GM12878 (cell line): ENCODE measurements at regions of chr3 and their contacts with region 1.

Region 1: DNA sequence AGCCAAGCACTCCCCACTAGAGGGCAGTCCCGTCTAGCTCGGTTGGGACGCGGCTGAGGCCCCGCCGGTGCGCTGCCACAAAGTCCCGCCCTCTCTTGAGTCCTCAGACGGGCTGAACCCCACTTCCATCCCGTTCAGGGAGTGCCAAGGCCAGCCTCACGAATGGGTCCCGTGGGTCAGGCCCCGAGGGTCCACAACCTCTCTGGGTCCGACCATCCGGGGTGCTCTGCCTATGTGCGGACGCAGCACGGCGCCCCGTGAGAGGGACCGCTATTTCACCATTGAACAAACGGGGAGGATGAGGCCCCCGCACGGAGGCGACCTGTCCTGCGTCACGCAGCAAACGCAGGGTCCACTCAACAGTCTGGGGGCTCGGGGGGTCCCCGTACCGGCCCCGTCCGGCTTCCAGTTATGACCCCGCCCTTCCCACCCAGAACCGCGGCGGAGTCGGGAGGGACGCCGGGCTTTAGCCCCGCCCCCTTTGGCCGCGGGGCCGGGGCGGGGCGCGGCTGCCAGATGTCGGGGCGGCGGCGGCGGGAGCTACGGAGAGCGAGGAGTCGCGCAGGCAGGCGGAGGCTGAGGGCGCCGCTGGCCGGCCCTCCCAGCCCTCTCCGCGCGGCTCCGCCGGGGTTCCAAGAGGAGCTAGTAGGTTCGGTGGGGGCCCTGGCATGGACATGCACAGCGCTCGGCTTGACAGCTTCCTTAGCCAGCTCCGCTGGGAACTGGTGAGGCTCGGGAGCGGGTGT is at the start of gene INKA1:
- DNase-seq: no peak
- ATAC-seq: peak; percentile 81
- H3K4me3 ChIP-seq: peak within 1 kb of the TSS; percentile 98
- H3K27ac ChIP-seq: peak within 1 kb of the TSS; percentile 37; the same call in 1 of the 2 replicates
- H3K4me1 ChIP-seq: peaks cover 39% of the 10 kb centered on the region
- H3K27me3 ChIP-seq: no peaks in the 10 kb centered on the region; a peak in 1 of 4 replicates
- CTCF ChIP-seq: peak; percentile 88 to 97 (median 93); a peak in 5 of 6 replicates
- EP300 ChIP-seq: no peak
- POLR2A ChIP-seq: peak; percentile 39; the same call in 1 of the 2 replicates
- RAD21 ChIP-seq: peak; percentile 81
- polyA plus RNA-seq, gene INKA1: 0.32 to 1.4 TPM

Region 2: GRCh38 chr3:49709852-49710251 is 93.0 kb before region 1 on chr3:
- CTCF ChIA-PET with region 1: no interaction called
- POLR2A ChIA-PET with region 1: no interaction called
- RAD21 ChIA-PET with region 1: no interaction called
- SMC1A ChIA-PET with region 1: no interaction called
- in situ Hi-C with region 1: no loop called
- intact Hi-C with region 1: no loop called
- DNase-seq: no peak
- ATAC-seq: no peak
- H3K4me3 ChIP-seq: no peak overlapping the region
- H3K27ac ChIP-seq: no peak overlapping the region
- H3K4me1 ChIP-seq: no peaks in the 10 kb centered on the region
- H3K27me3 ChIP-seq: no peaks in the 10 kb centered on the region
- CTCF ChIP-seq: no peak
- EP300 ChIP-seq: no peak
- POLR2A ChIP-seq: no peak
- RAD21 ChIP-seq: no peak

Region 3: DNA sequence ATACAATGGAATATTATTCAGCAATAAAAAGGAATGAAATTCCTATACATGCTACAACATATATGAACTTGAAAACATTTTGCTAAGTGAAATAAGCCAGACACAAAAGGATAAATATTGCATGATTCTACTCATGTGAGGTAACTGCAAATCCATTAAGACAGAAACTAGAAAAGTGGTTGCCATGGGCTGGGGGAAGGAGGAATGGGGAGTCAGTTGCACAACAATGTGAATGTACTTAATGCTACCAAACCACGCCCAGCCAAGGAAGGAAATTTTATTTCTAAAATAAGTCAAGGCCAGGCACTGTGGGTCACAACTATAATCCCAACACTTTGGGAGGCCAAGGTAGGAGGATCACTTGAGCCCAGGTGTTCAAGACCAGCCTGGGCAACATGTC is 69.3 kb before region 1 on chr3:
- CTCF ChIA-PET with region 1: no interaction called
- POLR2A ChIA-PET with region 1: no interaction called
- RAD21 ChIA-PET with region 1: no interaction called
- SMC1A ChIA-PET with region 1: no interaction called
- in situ Hi-C with region 1: no loop called
- intact Hi-C with region 1: no loop called
- DNase-seq: no peak
- ATAC-seq: no peak
- H3K4me3 ChIP-seq: no peak overlapping the region
- H3K27ac ChIP-seq: no peak overlapping the region
- H3K4me1 ChIP-seq: no peaks in the 10 kb centered on the region
- H3K27me3 ChIP-seq: no peaks in the 10 kb centered on the region
- CTCF ChIP-seq: no peak
- EP300 ChIP-seq: no peak
- POLR2A ChIP-seq: no peak
- RAD21 ChIP-seq: no peak

Region 4: GRCh38 chr3:49786241-49786958 is 16.5 kb before region 1 on chr3 and contains the start of gene IP6K1:
- CTCF ChIA-PET with region 1: interaction called, 6 read pairs
- POLR2A ChIA-PET with region 1: interaction called, 15 read pairs
- RAD21 ChIA-PET with region 1: interaction called, 14 read pairs
- SMC1A ChIA-PET with region 1: interaction called, 4 read pairs
- in situ Hi-C with region 1: no loop called
- intact Hi-C with region 1: no loop called
- DNase-seq: peak; percentile 99
- ATAC-seq: peak; percentile 99
- H3K4me3 ChIP-seq: peak within 1 kb of the TSS; percentile 96
- H3K27ac ChIP-seq: peak within 1 kb of the TSS; percentile 62
- H3K4me1 ChIP-seq: peaks cover 9% of the 10 kb centered on the region
- H3K27me3 ChIP-seq: no peaks in the 10 kb centered on the region
- CTCF ChIP-seq: no peak
- EP300 ChIP-seq: no peak
- POLR2A ChIP-seq: peak; percentile 96
- RAD21 ChIP-seq: no peak
- polyA plus RNA-seq, gene IP6K1: 1.3 to 2.0 TPM

Region 5: DNA sequence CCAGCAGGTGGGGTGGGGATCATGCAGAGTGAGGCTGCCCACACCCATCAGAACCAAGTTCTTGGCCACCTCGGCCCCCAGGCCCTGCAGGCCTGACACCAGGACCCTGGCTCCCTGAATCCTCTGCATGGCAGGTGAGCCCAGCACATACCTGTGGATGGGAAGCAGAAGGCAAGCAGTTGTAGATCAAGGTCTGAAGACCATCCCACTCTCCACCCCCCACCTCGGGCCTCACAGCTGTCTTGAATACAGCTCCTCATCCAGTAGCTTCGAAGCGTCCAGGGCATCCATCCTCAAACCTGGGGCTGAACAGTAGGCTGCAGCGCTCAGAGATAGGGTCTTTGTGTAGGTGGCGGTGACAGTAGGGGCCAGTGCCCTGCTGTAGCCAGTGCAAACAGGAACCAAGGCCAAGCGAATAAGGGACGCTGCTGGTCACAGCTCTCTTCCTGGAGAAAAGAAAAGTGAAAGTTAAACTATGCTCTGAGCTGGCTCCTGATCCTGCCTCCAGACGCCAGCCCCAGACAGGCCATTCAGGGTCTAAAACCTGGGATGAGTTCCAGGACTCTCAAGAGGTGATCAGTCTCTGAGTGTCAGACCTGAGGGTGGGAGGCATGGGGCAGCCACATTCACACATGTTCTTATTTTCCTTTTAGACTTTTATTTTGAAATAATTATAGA is 10.7 kb after region 1 on chr3 and contains the start of gene UBA7:
- CTCF ChIA-PET with region 1: interaction called, 99 read pairs
- POLR2A ChIA-PET with region 1: interaction called, 17 read pairs
- RAD21 ChIA-PET with region 1: interaction called, 71 read pairs
- SMC1A ChIA-PET with region 1: interaction called, 23 read pairs
- in situ Hi-C with region 1: no loop called
- intact Hi-C with region 1: no loop called
- DNase-seq: no peak
- ATAC-seq: peak; percentile 98
- H3K4me3 ChIP-seq: peak within 1 kb of the TSS; percentile 79
- H3K27ac ChIP-seq: peak within 1 kb of the TSS; percentile 94
- H3K4me1 ChIP-seq: peaks cover 13% of the 10 kb centered on the region
- H3K27me3 ChIP-seq: no peaks in the 10 kb centered on the region
- CTCF ChIP-seq: no peak
- EP300 ChIP-seq: no peak
- POLR2A ChIP-seq: peak; percentile 84
- RAD21 ChIP-seq: no peak
- polyA plus RNA-seq, gene UBA7: 11.8 to 22.2 TPM

Region 6: GRCh38 chr3:49844464-49845183 is 41.7 kb after region 1 on chr3:
- CTCF ChIA-PET with region 1: interaction called, 327 read pairs
- POLR2A ChIA-PET with region 1: interaction called, 21 read pairs
- RAD21 ChIA-PET with region 1: interaction called, 182 read pairs
- SMC1A ChIA-PET with region 1: interaction called, 146 read pairs
- in situ Hi-C with region 1: no loop called
- intact Hi-C with region 1: loop called (anchors 1 kb)
- DNase-seq: no peak
- ATAC-seq: no peak
- H3K4me3 ChIP-seq: no peak overlapping the region
- H3K27ac ChIP-seq: no peak overlapping the region
- H3K4me1 ChIP-seq: no peaks in the 10 kb centered on the region
- H3K27me3 ChIP-seq: no peaks in the 10 kb centered on the region
- CTCF ChIP-seq: no peak
- EP300 ChIP-seq: no peak
- POLR2A ChIP-seq: no peak
- RAD21 ChIP-seq: no peak

Region 7: DNA sequence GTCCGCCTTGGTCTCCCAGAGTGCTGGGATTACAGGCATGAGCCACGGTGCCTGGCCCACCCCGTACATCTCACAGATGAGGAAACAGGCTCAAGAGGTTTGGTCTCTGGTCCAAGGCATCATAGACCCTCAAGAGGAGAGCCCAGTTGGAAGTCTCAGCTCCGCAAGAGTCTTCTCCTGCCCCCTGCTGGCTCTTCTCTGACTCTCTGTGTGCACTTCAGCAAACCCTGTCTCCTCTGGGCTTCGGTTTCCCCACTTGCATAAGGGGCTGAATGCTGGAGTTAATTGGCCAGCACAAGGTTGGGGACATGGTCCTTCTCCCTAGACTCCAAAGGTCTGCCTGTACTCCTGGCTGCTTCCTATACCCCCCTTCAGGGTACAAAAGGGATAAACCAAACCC is 96.9 kb after region 1 on chr3:
- CTCF ChIA-PET with region 1: interaction called, 59 read pairs
- POLR2A ChIA-PET with region 1: interaction called, 6 read pairs
- RAD21 ChIA-PET with region 1: interaction called, 33 read pairs
- SMC1A ChIA-PET with region 1: interaction called, 4 read pairs
- in situ Hi-C with region 1: loop called (anchors 5 kb)
- intact Hi-C with region 1: no loop called
- DNase-seq: no peak
- ATAC-seq: no peak
- H3K4me3 ChIP-seq: no peak overlapping the region
- H3K27ac ChIP-seq: no peak overlapping the region
- H3K4me1 ChIP-seq: peaks cover 15% of the 10 kb centered on the region
- H3K27me3 ChIP-seq: no peaks in the 10 kb centered on the region
- CTCF ChIP-seq: peak in 2 of 3 experiments; percentile 29 to 30; a peak in 2 of 6 replicates
- EP300 ChIP-seq: no peak
- POLR2A ChIP-seq: no peak
- RAD21 ChIP-seq: peak; percentile 27; the same call in 1 of the 2 replicates

Region 8: GRCh38 chr3:49906004-49906743 is 103.3 kb after region 1 on chr3:
- CTCF ChIA-PET with region 1: interaction called, 59 read pairs
- POLR2A ChIA-PET with region 1: no interaction called
- RAD21 ChIA-PET with region 1: interaction called, 33 read pairs
- SMC1A ChIA-PET with region 1: interaction called, 7 read pairs
- in situ Hi-C with region 1: loop called (anchors 5 kb)
- intact Hi-C with region 1: loop called (anchors 2 kb)
- DNase-seq: no peak
- ATAC-seq: peak; percentile 72
- H3K4me3 ChIP-seq: 0 out of 2 replicates have a peak overlapping the region, but pooled peaks have one; percentile 3
- H3K27ac ChIP-seq: peak overlapping the region; percentile 46
- H3K4me1 ChIP-seq: peaks cover 25% of the 10 kb centered on the region
- H3K27me3 ChIP-seq: no peaks in the 10 kb centered on the region
- CTCF ChIP-seq: peak; percentile 66 to 77 (median 71); a peak in 5 of 6 replicates
- EP300 ChIP-seq: no peak
- POLR2A ChIP-seq: no peak
- RAD21 ChIP-seq: peak; percentile 72

Region 9: GRCh38 chr3:49929331-49930240 is 126.7 kb after region 1 on chr3 and contains the start of gene MON1A:
- CTCF ChIA-PET with region 1: interaction called, 5 read pairs
- POLR2A ChIA-PET with region 1: no interaction called
- RAD21 ChIA-PET with region 1: interaction called, 11 read pairs
- SMC1A ChIA-PET with region 1: interaction called, 6 read pairs
- in situ Hi-C with region 1: no loop called
- intact Hi-C with region 1: no loop called
- DNase-seq: peak; percentile 40
- ATAC-seq: peak; percentile 97
- H3K4me3 ChIP-seq: peak within 1 kb of the TSS; percentile 76
- H3K27ac ChIP-seq: peak within 1 kb of the TSS; percentile 75
- H3K4me1 ChIP-seq: no peaks in the 10 kb centered on the region; the same call in 1 of the 2 replicates
- H3K27me3 ChIP-seq: no peaks in the 10 kb centered on the region
- CTCF ChIP-seq: peak; percentile 8 to 24 (median 16); a peak in 2 of 6 replicates
- EP300 ChIP-seq: no peak
- POLR2A ChIP-seq: peak; percentile 84
- RAD21 ChIP-seq: no peak
- polyA plus RNA-seq, gene MON1A: 1.3 to 2.4 TPM